ENCODE measurements at regions of chr12 and their contacts with region 1.

Region 1: DNA sequence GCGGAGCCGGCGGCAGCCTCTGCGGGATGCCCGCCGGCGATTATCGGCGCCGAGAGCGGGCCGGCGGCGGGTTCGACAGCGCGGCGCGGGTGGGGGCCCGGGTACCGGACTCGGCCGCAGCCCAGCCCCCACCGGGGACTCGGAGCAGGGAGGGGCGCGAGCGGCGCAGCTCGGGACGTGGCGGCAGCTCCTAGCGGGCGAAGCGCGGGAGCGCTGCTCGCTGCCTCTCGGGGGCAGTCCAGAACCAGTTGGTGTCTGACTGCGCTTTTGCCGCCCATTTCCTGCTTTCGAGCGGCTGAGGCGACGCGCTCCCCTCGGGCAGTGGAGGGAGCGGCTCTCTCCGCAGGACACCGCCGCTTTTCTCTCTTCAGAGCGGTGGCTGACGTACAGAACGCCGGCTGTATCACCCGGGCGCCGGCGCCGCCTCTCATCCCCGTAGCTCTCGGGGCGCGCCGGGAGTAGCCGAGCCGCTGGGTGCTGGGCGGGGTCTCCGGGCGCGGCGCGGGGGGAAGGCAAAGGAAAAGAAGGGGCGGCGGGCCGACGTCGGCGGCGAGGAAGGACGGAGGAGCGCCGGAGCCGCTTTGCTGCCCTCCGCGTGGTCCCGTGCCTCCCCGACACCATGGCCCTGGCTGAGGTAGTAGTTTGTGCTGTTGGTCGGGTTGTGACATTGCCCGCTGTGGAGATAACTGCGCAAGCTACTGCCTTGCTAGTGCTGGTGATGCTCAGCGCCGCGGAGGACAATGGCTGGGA is 136.6 kb downstream of the MON2 start:
- DNase-seq: peak; percentile 44 to 84
- H3K4me3 ChIP-seq: peak overlapping the region; percentile 72 to 79 (median 73)
- H3K27ac ChIP-seq: peak overlapping the region; percentile 99
- H3K4me1 ChIP-seq: peaks cover 0 to 6% (median 4%) of the 10 kb centered on the region in 4 experiments; a peak in 5 of 7 replicates
- H3K27me3 ChIP-seq: no peaks in the 10 kb centered on the region
- CTCF ChIP-seq: peak; percentile 45 to 62 (median 45)
- EP300 ChIP-seq: peak in 1 of 2 experiments; percentile 2; a peak in 1 of 3 replicates
- POLR2A ChIP-seq: peak; percentile 24 to 49
- RAD21 ChIP-seq: peak; percentile 46 to 55

Region 2: GRCh38 chr12:62522984-62523383 is 80.3 kb before region 1 on chr12:
- CTCF ChIA-PET with region 1: no interaction called
- POLR2A ChIA-PET with region 1: no interaction called
- DNase-seq: no peak
- H3K4me3 ChIP-seq: no peak overlapping the region
- H3K27ac ChIP-seq: no peak overlapping the region
- H3K4me1 ChIP-seq: no peaks in the 10 kb centered on the region
- H3K27me3 ChIP-seq: no peaks in the 10 kb centered on the region
- CTCF ChIP-seq: no peak
- EP300 ChIP-seq: no peak
- POLR2A ChIP-seq: no peak
- RAD21 ChIP-seq: peak; percentile 33 to 40; a peak in 3 of 4 replicates

Region 3: DNA sequence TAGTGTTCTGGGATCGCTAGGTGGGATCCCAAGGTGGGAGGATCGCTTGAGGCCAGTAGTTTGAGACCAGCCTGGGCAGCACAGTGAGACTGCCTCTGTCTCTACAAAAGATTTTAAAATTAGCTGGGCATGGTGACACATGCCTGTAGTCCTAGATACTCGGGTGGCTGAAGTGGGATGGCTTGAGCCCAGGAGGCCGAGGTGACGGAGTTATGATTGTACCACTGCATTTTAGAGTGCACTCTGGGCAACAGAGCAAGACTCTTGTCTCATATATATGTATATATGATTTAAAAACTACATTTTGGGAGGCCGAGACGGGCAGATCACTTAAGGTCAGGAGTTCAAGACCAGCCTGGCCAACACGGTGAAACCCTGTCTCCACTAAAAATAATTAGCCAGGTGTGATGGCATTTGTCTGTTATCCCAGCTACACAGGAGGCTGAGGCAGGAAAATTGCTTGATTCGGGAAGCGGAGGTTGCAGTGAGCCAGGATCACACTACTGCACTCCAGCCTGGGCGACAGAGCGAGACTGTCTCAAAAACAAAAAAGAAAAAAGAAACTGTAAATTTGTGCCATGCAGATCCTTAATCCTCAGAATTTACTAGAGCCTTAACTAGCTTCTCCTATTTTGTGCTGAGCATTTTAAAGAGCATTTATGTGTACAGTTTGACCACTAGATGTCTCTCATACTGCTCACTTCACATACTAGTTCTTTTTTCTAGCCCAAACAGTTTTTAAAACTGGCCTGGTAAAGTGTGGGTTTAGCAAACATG is 21.8 kb before region 1 on chr12:
- CTCF ChIA-PET with region 1: interaction called, 17 read pairs
- POLR2A ChIA-PET with region 1: interaction called, 6 read pairs
- DNase-seq: no peak
- H3K4me3 ChIP-seq: no peak overlapping the region
- H3K27ac ChIP-seq: no peak overlapping the region
- H3K4me1 ChIP-seq: no peaks in the 10 kb centered on the region
- H3K27me3 ChIP-seq: no peaks in the 10 kb centered on the region
- CTCF ChIP-seq: peak in 2 of 3 experiments; percentile 46 to 56; a peak in 2 of 4 replicates
- EP300 ChIP-seq: no peak
- POLR2A ChIP-seq: no peak
- RAD21 ChIP-seq: peak; percentile 73 to 74

Region 4: GRCh38 chr12:62618930-62619329 is 15.7 kb after region 1 on chr12:
- CTCF ChIA-PET with region 1: interaction called, 8 read pairs
- POLR2A ChIA-PET with region 1: interaction called, 17 read pairs
- DNase-seq: no peak
- H3K4me3 ChIP-seq: no peak overlapping the region
- H3K27ac ChIP-seq: no peak overlapping the region
- H3K4me1 ChIP-seq: peaks cover 0 to 6% (median 0%) of the 10 kb centered on the region in 4 experiments; a peak in 3 of 7 replicates
- H3K27me3 ChIP-seq: no peaks in the 10 kb centered on the region
- CTCF ChIP-seq: no peak
- EP300 ChIP-seq: no peak
- POLR2A ChIP-seq: no peak
- RAD21 ChIP-seq: no peak

Region 5: GRCh38 chr12:62625228-62625627 is 22.0 kb after region 1 on chr12:
- CTCF ChIA-PET with region 1: interaction called, 4 read pairs
- POLR2A ChIA-PET with region 1: interaction called, 16 read pairs
- DNase-seq: no peak
- H3K4me3 ChIP-seq: no peak overlapping the region
- H3K27ac ChIP-seq: no peak overlapping the region
- H3K4me1 ChIP-seq: peaks cover 2 to 13% (median 10%) of the 10 kb centered on the region in 4 experiments; a peak in 6 of 7 replicates
- H3K27me3 ChIP-seq: peaks cover 0 to 3% (median under 1%) of the 10 kb centered on the region in 4 experiments; a peak in 3 of 7 replicates
- CTCF ChIP-seq: no peak
- EP300 ChIP-seq: no peak
- POLR2A ChIP-seq: no peak
- RAD21 ChIP-seq: no peak

Region 6: GRCh38 chr12:62655666-62656151 is 52.5 kb after region 1 on chr12:
- CTCF ChIA-PET with region 1: interaction called, 3 read pairs
- POLR2A ChIA-PET with region 1: interaction called, 20 read pairs
- DNase-seq: no peak
- H3K4me3 ChIP-seq: no peak overlapping the region; a peak in 1 of 8 replicates
- H3K27ac ChIP-seq: no peak overlapping the region
- H3K4me1 ChIP-seq: peaks cover 37 to 59% (median 49%) of the 10 kb centered on the region in 4 experiments
- H3K27me3 ChIP-seq: peaks cover 5 to 22% (median 14%) of the 10 kb centered on the region in 4 experiments
- CTCF ChIP-seq: no peak
- EP300 ChIP-seq: no peak
- POLR2A ChIP-seq: no peak
- RAD21 ChIP-seq: peak in 1 of 2 experiments; percentile 5; a peak in 1 of 4 replicates

Region 7: DNA sequence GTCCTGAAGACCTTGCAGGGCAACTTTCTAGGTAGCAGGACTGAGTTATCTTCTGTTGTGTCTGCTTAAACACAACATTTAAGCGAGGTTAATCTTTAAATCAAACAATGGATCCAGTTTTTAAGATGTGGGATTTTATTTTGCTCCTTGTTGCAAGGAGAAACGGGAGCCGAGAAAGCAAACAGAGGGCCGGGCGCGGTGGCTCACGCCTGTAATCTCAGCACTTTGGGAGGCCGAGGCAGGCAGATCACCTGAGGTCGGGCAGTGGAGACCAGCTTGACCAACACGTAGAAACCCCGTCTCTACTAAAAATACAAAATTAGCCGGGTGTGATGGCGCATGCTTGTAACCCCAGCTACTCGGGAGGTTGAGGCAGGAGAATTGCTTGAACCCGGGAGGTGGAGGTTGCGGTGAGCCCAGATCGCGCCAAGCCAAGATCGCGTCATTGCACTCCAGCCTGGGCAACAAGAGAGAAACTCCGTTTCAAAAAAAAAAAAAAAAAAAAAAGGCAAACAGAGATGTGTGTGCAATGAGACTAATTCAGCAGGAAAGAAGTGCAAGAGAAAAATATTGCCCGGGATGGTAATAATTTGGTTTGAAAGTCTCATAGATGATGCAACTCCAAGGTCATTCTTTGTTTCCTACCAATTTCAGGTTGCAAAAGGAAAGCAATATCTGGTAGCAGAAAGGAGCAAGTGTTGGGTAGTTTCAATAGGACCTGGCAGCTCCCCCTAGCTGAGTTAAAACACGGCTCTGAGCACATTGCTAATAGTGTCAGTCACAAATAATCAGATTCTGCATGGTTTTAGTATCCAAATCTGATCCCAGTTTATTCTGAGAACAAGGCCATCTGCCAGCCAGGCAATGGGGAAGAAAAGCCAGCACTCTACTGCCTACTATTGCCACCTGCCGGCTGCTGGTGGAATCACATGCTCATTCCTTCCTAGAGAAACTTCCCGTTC is 190.3 kb after region 1 on chr12:
- CTCF ChIA-PET with region 1: interaction called, 12 read pairs
- POLR2A ChIA-PET with region 1: interaction called, 27 read pairs
- DNase-seq: peak; percentile 61 to 93
- H3K4me3 ChIP-seq: no peak overlapping the region
- H3K27ac ChIP-seq: no peak overlapping the region; the same call in 1 of the 2 replicates
- H3K4me1 ChIP-seq: peaks cover 0 to 7% (median 0%) of the 10 kb centered on the region in 4 experiments; a peak in 2 of 7 replicates
- H3K27me3 ChIP-seq: no peaks in the 10 kb centered on the region
- CTCF ChIP-seq: peak; percentile 71 to 87 (median 81)
- EP300 ChIP-seq: no peak
- POLR2A ChIP-seq: no peak
- RAD21 ChIP-seq: peak; percentile 98